ENCODE measurements at regions of chr5 and their contacts with region 1.

Region 1: DNA sequence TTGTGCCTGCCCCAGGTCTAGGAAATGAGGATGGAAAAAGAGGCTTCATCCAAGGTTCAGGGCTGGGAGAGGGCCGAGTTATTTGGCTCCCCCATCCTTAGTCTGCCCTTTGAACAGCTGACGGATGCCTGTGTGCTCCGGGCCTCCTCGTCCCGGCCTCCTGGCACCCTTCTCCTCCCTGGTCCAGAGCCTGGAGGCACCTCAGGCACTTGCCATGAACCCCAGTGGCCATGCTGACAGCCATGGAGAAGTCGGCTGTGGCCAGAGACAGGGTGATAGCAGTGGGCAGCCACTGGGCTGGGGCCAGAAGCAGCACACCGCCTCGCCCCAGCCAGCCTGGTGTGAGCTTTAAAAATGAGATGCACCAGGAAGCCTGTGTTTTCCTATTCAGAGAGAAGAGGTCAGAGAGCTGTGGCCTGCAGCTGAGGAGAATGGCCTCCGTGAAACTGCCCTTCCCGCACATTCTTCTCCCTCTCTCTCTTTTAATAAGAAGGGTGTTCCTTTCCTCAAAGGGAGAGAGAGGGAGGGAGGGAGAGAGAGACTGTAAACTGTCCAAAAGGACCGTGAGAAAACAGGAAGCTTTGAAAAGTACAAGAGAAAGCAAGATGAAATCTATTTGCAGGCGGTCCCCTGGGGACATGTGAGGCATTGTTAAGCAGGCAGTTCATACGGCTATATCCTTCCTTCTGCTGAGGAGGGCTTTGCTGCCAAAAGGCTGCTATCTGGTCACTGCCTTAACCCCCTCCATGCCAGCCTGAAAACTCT is 55.3 kb downstream of the ZNF366 start:
- DNase-seq: peak; percentile 42
- H3K4me3 ChIP-seq: no peak overlapping the region
- H3K27ac ChIP-seq: peak overlapping the region; percentile 70 to 83
- H3K4me1 ChIP-seq: peaks cover 10% of the 10 kb centered on the region
- H3K27me3 ChIP-seq: no peaks in the 10 kb centered on the region
- CTCF ChIP-seq: no peak
- POLR2A ChIP-seq: no peak

Region 2: GRCh38 chr5:72185496-72186329 is 266.2 kb before region 1 on chr5:
- intact Hi-C with region 1: no loop called
- DNase-seq: no peak
- H3K4me3 ChIP-seq: no peak overlapping the region
- H3K27ac ChIP-seq: no peak overlapping the region
- H3K4me1 ChIP-seq: no peaks in the 10 kb centered on the region
- H3K27me3 ChIP-seq: no peaks in the 10 kb centered on the region
- CTCF ChIP-seq: no peak
- POLR2A ChIP-seq: no peak

Region 3: DNA sequence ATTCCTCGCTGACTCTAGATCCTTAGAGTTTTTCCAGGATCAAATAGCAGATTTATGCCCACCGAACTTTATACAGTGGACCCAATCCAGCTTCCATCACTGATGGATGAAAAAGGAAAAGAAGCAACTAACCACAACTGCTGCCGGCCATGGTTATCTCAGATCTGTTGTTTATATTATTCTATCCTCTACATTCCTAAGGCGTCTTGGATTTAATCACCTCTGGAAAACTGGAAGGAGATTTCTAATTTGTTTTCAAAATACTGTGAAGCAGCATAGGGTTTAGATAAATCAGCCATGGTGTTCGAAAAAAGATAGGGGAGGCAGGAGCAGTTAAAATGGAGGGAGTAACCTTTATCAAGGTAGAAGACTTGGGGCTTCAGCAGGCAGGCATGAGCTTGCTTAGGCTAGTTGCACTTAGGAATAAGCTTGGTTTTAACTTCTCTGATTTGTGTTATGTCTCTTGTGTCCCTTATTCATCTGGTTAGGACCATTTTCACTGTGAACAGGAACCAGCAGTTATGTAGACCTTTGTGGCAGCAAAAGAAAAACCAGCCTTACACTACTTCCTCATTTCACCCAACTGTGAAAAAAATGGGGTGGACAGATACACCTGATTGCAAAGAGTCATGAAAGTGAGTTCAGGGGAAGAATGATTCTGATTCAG is 56.1 kb after region 1 on chr5:
- intact Hi-C with region 1: loop called (anchors 5 kb)
- DNase-seq: no peak
- H3K4me3 ChIP-seq: no peak overlapping the region
- H3K27ac ChIP-seq: peak overlapping the region in 1 of 2 donors; percentile 32
- H3K4me1 ChIP-seq: peaks cover 3% of the 10 kb centered on the region
- H3K27me3 ChIP-seq: no peaks in the 10 kb centered on the region
- CTCF ChIP-seq: no peak
- POLR2A ChIP-seq: no peak

Region 4: GRCh38 chr5:73061593-73061992 is 609.7 kb after region 1 on chr5:
- intact Hi-C with region 1: no loop called
- DNase-seq: no peak
- H3K4me3 ChIP-seq: no peak overlapping the region
- H3K27ac ChIP-seq: no peak overlapping the region
- H3K4me1 ChIP-seq: no peaks in the 10 kb centered on the region
- H3K27me3 ChIP-seq: no peaks in the 10 kb centered on the region
- CTCF ChIP-seq: no peak
- POLR2A ChIP-seq: no peak